ENCODE measurements at regions of chr5 and their contacts with region 1.

Region 1: DNA sequence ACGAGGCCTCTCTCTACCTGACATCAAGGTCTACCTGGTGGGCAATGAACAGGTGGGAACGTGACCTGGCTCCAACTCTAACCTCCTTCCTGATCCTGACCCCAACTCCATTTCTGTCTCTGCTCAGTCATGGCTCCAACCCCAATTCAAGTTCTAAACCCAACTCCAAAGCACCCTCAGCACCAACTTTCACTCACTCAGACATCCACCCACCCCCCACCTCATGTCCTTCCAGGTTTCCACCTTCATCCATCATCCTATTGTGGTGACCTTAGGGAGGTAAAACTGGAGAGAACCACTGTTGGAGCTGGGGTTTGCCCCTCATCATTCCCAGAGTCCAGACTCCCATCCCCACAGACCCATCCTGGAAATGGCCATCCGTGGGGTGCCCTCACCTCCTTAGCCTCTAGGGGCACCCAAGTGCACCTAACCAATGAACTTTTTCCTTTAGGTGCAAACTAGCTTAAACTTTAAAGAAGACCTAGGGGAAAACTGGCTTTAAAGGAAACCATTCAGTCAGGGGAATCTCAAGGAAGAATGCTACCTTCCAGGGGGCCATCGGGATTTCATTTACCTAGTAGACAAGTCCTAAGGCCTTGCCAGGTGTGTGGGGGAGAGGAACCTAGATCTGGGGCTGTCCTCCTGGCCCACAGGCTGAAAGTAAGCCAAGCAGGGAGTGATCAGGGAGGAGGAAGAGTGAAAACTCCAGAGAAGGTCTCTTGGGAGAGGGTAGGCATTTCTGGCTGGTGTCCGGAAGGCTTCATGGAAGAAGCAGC is 11.3 kb downstream of the RGS14 start:
- DNase-seq: no peak
- ATAC-seq: no peak

Region 2: DNA sequence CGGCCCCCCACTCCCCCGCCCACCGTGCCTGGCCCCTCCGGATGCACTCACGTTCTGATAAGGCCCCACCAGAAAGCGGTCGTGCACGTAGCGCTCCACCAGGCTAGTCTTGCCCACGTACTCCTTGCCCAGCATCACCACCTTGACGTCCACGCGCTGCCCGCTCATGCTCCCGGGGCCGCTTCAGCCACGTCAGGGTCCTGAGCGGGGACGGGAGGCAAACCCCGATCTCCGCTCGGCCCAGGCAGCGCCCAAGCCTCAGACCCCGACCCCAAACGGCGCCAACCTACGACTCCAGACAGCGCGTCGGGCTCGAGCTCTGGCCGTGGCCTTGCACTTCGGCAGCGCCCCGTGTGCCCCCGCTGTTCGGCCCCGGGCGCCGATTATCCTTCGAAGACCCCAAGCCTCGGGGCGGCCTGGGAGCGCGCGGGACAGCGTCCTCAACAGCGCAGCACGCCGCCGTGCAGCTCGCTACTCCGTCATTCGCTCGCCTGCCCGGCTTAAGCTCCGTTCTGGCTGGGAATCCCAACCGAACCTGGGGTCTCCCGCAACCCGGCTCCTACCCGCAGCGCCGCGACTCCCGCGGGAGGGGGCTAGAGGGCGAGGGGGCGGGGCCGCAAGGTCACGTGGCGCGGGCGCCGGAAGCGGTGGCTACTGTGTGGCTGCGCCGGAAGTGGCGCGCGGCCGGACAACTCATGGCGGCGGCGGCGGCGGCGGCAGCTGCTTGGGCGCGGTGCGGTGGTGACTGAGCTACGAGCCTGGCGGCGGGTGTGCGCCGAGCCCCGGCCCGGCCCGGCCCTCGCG is 65.7 kb before region 1 on chr5 and contains the starts of genes PRELID1 and RAB24:
- intact Hi-C with region 1: loop called (anchors 5 kb)
- DNase-seq: peak; percentile 96
- ATAC-seq: peak; percentile 84
- total RNA-seq, gene PRELID1: 34.1 TPM
- total RNA-seq, gene RAB24: 18.9 TPM

Measured in Right ventricle myocardium inferior (tissue), 1 donor.